Activated CD4-positive, alpha-beta T cell treated with anti-CD3 and anti-CD28 coated beads, Interleukin-2, amount 10 ng/mL, durations not matched to agents 24 days and 14 days (primary cell): ENCODE measurements at regions of chr4 and their contacts with region 1.

Region 1: GRCh38 chr4:151117371-151117962 is 18.0 kb downstream of the RPS3A start:
- DNase-seq: peak; percentile 87
- H3K4me3 Mint-ChIP-seq: no peak overlapping the region
- H3K27ac Mint-ChIP-seq: no peak overlapping the region
- H3K4me1 Mint-ChIP-seq: peaks cover 5% of the 10 kb centered on the region
- H3K27me3 Mint-ChIP-seq: no peaks in the 10 kb centered on the region

Region 2: GRCh38 chr4:151099229-151099975 is 18.1 kb before region 1 on chr4 and contains the start of gene RPS3A:
- intact Hi-C with region 1: loop called (anchors 2 kb)
- DNase-seq: peak; percentile 100
- H3K4me3 Mint-ChIP-seq: peak within 1 kb of the TSS; percentile 98
- H3K27ac Mint-ChIP-seq: peak within 1 kb of the TSS; percentile 98
- H3K4me1 Mint-ChIP-seq: peaks cover 48% of the 10 kb centered on the region
- H3K27me3 Mint-ChIP-seq: peaks cover 4% of the 10 kb centered on the region
- total RNA-seq, gene RPS3A: 1,850 and 1,855 TPM in 2 replicates

Region 3: GRCh38 chr4:151362404-151363164 is 245.1 kb after region 1 on chr4:
- intact Hi-C with region 1: loop called (anchors 1 kb)
- DNase-seq: peak; percentile 92
- H3K4me3 Mint-ChIP-seq: no peak overlapping the region
- H3K27ac Mint-ChIP-seq: no peak overlapping the region
- H3K4me1 Mint-ChIP-seq: peaks cover 2% of the 10 kb centered on the region
- H3K27me3 Mint-ChIP-seq: peaks cover 13% of the 10 kb centered on the region

Region 4: DNA sequence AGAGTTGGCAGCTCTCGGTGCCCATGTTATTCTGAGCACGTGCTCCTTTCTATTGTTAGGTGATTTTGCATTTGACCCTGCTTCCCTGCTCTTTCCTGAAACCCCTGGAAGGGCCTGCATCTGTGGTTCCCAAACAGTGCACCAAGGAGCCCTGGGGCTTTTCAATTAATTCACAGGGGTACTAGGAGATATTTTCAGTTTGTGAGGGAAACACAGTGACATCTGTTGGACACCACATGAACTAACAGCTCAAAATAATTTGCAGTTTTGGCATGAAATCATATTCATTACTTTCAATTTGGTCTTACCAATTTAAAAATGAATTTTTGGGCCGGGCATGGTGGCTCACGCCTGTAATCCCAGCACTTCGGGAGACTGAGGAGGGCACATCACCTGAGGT is 486.8 kb after region 1 on chr4:
- intact Hi-C with region 1: loop called (anchors 10 kb)
- DNase-seq: no peak
- H3K4me3 Mint-ChIP-seq: no peak overlapping the region
- H3K27ac Mint-ChIP-seq: no peak overlapping the region
- H3K4me1 Mint-ChIP-seq: peaks cover 2% of the 10 kb centered on the region
- H3K27me3 Mint-ChIP-seq: peaks cover 8% of the 10 kb centered on the region

Region 5: GRCh38 chr4:152779513-152780266 is 1662.2 kb after region 1 on chr4 and contains the starts of genes ARFIP1 and TIGD4:
- intact Hi-C with region 1: loop called (anchors 10 kb)
- DNase-seq: peak; percentile 99
- H3K4me3 Mint-ChIP-seq: peak within 1 kb of the TSS; percentile 100
- H3K27ac Mint-ChIP-seq: peak within 1 kb of the TSS; percentile 97
- H3K4me1 Mint-ChIP-seq: peaks cover 44% of the 10 kb centered on the region
- H3K27me3 Mint-ChIP-seq: peaks cover 30% of the 10 kb centered on the region
- total RNA-seq, gene ARFIP1: 13.0 and 14.6 TPM in 2 replicates
- total RNA-seq, gene TIGD4: 0.28 and 0.31 TPM in 2 replicates